PC-3 (cell line): ENCODE measurements at regions of chr6 and their contacts with region 1.

Region 1: DNA sequence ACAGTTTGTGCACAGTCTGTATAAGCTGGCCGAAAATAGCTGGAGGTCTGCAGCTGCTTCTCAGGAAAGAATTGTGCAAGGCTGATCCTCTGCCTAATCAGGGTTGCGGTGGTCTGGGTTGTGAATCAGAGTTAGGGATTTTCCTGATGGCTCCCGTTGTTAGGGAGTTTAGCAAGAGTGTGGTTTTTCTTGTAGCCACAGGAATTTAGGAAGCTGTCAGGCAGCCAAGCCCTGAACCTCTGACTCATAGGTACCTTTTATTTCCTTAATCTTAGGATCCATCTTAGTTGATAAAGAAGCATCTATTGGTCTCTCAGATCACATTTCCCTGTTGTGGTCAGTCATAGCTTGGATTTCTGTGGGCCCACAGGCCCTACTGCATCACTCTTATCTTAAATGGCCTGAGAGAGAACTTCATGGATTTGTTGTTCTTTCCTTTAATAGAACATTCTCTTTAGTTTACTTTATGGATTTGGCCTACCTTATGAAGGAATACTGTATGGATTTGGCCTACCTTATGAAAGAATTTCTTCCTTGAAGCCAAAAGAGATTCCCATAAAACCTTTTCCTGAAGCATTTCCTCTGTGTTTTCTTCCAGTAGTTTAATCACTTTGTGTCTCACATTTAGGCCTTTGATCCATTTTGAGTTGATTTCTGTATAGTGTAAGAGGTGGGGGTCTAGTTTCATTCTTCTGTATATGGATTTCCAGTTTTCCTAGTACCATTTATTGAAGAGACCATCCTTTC is 10.3 kb downstream of the KIF25 start:
- DNase-seq: peak; percentile 94
- ATAC-seq: peak; percentile 97
- H3K4me3 ChIP-seq: no peak overlapping the region
- H3K27ac ChIP-seq: peak overlapping the region; percentile 74
- H3K4me1 ChIP-seq: peaks cover 13% of the 10 kb centered on the region
- H3K27me3 ChIP-seq: no peaks in the 10 kb centered on the region
- CTCF ChIP-seq: no peak

Region 2: GRCh38 chr6:167980911-167981580 is 26.7 kb before region 1 on chr6:
- CTCF ChIA-PET with region 1: no interaction called
- POLR2A ChIA-PET with region 1: no interaction called
- intact Hi-C with region 1: no loop called
- DNase-seq: no peak
- ATAC-seq: no peak
- H3K4me3 ChIP-seq: no peak overlapping the region
- H3K27ac ChIP-seq: no peak overlapping the region
- H3K4me1 ChIP-seq: no peaks in the 10 kb centered on the region
- H3K27me3 ChIP-seq: no peaks in the 10 kb centered on the region
- CTCF ChIP-seq: no peak

Region 3: GRCh38 chr6:168025831-168026710 is 18.3 kb after region 1 on chr6:
- CTCF ChIA-PET with region 1: no interaction called
- POLR2A ChIA-PET with region 1: no interaction called
- intact Hi-C with region 1: loop called (anchors 1 kb)
- DNase-seq: no peak
- ATAC-seq: no peak
- H3K4me3 ChIP-seq: no peak overlapping the region
- H3K27ac ChIP-seq: no peak overlapping the region
- H3K4me1 ChIP-seq: peaks cover 7% of the 10 kb centered on the region
- H3K27me3 ChIP-seq: no peaks in the 10 kb centered on the region
- CTCF ChIP-seq: no peak